ENCODE measurements at regions of chr3 and their contacts with region 1.

Region 1: DNA sequence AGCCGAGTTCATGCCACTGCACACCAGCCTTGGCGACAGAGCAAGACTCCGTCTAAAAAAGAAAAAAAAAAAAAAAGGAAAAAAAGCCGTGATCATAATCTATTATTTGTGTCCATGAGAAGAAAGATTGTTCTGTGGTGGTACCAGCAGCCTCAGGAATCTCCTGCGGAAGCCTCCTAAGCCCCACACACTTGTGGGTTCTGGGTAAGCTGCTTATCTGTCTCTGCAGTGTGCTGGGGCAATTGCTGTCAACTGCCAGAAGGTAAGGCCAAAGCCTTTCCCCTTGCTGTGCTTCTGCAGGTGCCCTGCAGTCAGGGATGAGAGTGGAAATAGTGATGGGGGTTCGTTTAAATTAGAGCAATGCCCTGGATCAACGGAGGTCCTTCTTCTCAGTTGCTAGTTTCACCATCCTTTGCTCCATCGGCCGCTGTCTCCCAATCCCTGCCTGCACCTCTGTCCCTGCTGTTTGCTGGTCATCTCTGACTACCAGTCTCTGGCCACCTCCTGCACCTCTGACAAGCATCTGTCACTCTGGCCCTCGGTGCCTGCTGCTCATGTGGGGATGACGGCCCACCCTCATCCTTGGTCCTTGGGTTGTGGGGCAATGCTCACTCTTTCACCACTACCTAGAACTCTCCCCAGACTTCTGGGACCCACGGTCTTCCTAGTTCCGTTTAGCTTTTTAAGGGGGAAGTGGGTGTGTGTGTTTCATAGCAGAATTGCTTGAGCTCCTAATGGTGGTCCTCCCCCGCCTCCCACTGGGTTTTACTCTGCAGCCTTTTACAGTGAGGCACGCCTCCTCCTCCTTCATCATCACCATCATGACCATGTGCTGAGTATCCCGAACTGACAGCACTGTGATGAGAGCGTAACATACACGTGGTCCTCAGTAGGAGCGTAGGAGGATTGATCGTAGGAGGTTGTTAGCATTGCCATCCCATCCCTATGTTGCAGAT is 25.5 kb downstream of the CHRD start:
- DNase-seq: no peak
- ATAC-seq: no peak
- H3K4me3 ChIP-seq: no peak overlapping the region
- H3K27ac ChIP-seq: no peak overlapping the region
- H3K4me1 ChIP-seq: no peaks in the 10 kb centered on the region
- H3K27me3 ChIP-seq: peaks cover 51% of the 10 kb centered on the region
- CTCF ChIP-seq: no peak
- POLR2A ChIP-seq: no peak
- RAD21 ChIP-seq: no peak

Region 2: DNA sequence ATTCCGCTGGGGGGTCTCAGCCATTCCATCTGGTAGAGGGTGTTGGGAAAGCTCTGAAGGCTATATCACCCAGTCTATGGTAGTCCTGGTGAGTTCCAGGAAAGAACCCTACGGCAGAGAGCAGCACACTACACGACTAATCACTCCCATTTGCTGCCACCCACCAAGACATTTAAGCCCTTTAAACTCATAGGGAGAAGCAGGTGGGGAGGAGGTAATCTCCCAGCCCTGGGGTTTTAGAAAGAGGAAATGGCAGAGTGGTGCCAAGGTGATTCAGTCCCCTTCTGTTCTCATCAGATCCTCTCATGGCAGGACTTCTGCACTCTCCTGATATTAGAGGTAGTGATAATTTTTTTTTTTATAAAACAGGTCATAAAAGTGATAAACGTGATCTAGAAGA is 186.5 kb before region 1 on chr3:
- CTCF ChIA-PET with region 1: no interaction called
- POLR2A ChIA-PET with region 1: interaction called, 10 read pairs
- dilution Hi-C with region 1: no loop called
- in situ Hi-C with region 1: no loop called
- intact Hi-C with region 1: no loop called
- DNase-seq: no peak
- ATAC-seq: no peak
- H3K4me3 ChIP-seq: no peak overlapping the region
- H3K27ac ChIP-seq: no peak overlapping the region
- H3K4me1 ChIP-seq: no peaks in the 10 kb centered on the region
- H3K27me3 ChIP-seq: peaks cover 3% of the 10 kb centered on the region; the same call in 1 of the 2 replicates
- CTCF ChIP-seq: no peak
- POLR2A ChIP-seq: no peak
- RAD21 ChIP-seq: no peak